MCF 10A (cell line): ENCODE measurements at regions of chr2 and their contacts with region 1.

Region 1: GRCh38 chr2:241102239-241102803 is at the start of gene MTERF4:
- DNase-seq: peak; percentile 88
- H3K4me3 Mint-ChIP-seq: peak within 1 kb of the TSS; percentile 94
- H3K27ac Mint-ChIP-seq: peak within 1 kb of the TSS; percentile 92
- H3K4me1 Mint-ChIP-seq: peaks cover 11% of the 10 kb centered on the region
- H3K27me3 Mint-ChIP-seq: no peaks in the 10 kb centered on the region
- CTCF ChIP-seq: no peak
- total RNA-seq, gene MTERF4: 29.9 and 34.3 TPM in 2 replicates

Region 2: GRCh38 chr2:240586198-240586918 is 516.0 kb before region 1 on chr2 and contains the start of gene CAPN10:
- CTCF ChIA-PET with region 1: no interaction called
- POLR2A ChIA-PET with region 1: interaction called, 12 read pairs
- intact Hi-C with region 1: no loop called
- DNase-seq: peak; percentile 96
- H3K4me3 Mint-ChIP-seq: peak within 1 kb of the TSS; percentile 87
- H3K27ac Mint-ChIP-seq: peak within 1 kb of the TSS; percentile 94
- H3K4me1 Mint-ChIP-seq: peaks cover 35% of the 10 kb centered on the region
- H3K27me3 Mint-ChIP-seq: no peaks in the 10 kb centered on the region
- CTCF ChIP-seq: no peak
- total RNA-seq, gene CAPN10: 27.6 and 35.2 TPM in 2 replicates

Region 3: DNA sequence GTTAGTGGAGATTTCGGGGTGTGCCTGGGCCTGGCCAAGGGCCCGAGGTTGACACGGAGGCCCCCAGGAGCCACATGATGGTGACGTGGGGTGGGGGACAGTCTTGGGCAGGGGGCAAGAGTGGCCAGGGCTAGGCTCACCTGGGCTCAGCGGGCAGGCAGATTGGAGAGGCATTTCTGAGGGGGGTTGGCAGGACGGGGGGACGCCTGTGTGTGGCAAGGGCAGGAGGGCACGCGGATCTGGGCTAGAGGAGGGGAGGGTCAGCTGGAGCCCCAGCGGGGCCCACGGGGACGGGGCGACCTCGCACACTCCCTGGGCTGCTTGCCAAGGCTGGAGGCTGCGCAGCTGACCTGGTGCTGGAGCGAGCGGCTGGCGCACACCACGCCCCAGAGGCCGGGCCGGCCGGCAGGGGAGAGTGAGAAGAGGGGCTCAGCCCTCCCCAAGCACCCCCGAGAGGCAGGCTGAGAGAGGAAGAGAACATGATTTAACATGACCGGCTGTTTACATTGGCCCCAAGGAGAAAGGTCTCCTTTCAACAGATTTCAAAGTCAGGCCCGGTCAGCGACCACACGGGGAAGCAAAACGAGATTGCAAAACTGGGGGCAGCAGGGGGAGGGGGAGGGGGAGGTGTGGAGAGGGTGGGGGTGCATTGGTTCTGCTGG is 141.9 kb before region 1 on chr2:
- CTCF ChIA-PET with region 1: no interaction called
- POLR2A ChIA-PET with region 1: no interaction called
- intact Hi-C with region 1: no loop called
- DNase-seq: peak; percentile 72
- H3K4me3 Mint-ChIP-seq: no peak overlapping the region
- H3K27ac Mint-ChIP-seq: no peak overlapping the region
- H3K4me1 Mint-ChIP-seq: no peaks in the 10 kb centered on the region
- H3K27me3 Mint-ChIP-seq: peaks cover 11% of the 10 kb centered on the region
- CTCF ChIP-seq: no peak

Region 4: DNA sequence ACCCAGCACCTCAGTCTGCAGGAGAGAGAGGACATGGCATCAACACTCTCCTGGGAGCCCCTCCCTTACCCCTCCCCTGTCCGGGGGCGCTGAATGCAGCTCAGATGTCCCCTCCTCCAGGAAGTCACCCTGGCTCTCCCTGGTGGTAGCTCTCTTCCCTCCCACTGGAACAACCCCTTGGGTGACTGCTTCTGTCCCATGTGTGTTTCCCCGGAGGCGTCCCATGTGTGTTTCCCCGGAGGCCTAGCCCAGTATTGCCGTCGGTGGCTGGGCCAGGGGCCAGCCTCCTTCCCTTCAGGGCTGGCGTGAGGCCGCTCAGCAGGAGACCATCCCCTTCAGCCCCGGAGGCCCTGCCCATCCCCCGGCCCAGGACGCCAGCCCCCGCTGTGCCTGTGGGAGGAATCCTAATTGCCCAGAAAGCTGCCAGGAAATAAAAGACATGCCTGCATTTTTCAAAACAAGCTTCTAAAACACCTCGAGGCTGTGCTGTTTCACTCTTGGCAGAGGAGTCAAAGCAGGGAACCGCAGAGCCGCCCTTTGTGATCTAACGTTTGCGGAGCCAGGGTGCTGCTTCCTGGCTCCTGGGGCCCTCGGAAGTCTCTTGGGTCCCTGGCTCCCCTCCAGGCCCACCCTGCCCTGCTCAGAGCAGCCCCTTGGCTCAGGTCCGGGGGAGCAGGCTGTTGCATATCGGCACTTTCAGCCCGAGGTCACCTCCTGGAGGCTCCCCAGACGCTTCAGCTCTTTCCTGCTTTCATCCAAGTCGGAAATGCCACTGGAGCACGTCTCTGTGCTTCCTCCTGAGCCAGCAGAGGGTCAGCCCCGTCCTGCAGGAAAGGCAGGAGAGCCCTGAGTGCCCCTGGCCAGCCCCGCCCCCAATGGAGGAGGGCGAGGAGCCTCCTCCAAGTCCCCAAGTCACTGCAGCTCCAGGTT is 92.5 kb before region 1 on chr2:
- CTCF ChIA-PET with region 1: interaction called, 3 read pairs
- POLR2A ChIA-PET with region 1: interaction called, 11 read pairs
- intact Hi-C with region 1: no loop called
- DNase-seq: peak; percentile 94
- H3K4me3 Mint-ChIP-seq: peak overlapping the region; percentile 60
- H3K27ac Mint-ChIP-seq: peak overlapping the region; percentile 27
- H3K4me1 Mint-ChIP-seq: peaks cover 12% of the 10 kb centered on the region
- H3K27me3 Mint-ChIP-seq: no peaks in the 10 kb centered on the region
- CTCF ChIP-seq: no peak

Region 5: GRCh38 chr2:241064008-241064801 is 38.1 kb before region 1 on chr2:
- CTCF ChIA-PET with region 1: no interaction called
- POLR2A ChIA-PET with region 1: interaction called, 22 read pairs
- intact Hi-C with region 1: no loop called
- DNase-seq: peak; percentile 57
- H3K4me3 Mint-ChIP-seq: peak overlapping the region; percentile 74
- H3K27ac Mint-ChIP-seq: no peak overlapping the region
- H3K4me1 Mint-ChIP-seq: peaks cover 21% of the 10 kb centered on the region
- H3K27me3 Mint-ChIP-seq: no peaks in the 10 kb centered on the region
- CTCF ChIP-seq: no peak

Region 6: DNA sequence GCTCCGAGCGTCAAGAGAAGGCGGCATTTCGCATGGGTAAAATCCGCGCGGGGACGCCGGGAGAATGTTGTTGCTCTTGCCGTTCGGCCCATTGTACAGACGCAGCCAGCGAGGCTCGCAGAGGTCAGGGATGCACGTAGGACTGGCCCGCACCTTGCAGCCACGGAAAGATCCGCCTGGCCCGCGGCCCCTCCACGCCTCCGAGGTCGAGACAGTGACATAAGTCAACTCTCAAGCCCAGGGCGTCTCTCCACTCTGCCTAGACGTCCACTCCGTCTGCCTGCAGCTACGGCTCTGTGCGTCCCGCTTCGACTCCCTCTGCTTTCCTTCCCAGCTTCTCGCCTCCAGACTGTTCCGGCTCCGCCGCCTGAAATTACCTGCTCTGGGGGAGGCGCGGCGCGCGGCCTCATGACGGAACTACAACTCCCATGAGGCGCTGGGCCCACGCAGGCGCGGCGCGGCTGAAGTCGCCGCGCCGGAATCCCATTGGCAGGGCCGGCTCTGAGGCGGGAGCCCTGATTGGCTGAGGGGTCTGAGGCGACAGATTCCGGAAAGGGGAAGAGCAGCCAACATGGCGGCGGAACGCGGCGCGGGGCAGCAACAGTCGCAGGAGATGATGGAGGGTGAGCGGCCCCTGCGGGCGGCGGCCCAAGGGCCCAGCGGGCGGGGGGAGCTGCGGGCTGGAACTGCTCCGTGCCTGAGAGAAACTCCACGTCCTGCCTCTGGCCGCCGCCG is 47.8 kb after region 1 on chr2 and contains the start of gene PPP1R7:
- CTCF ChIA-PET with region 1: no interaction called
- POLR2A ChIA-PET with region 1: interaction called, 38 read pairs
- intact Hi-C with region 1: loop called (anchors 2 kb)
- DNase-seq: peak; percentile 94
- H3K4me3 Mint-ChIP-seq: peak within 1 kb of the TSS; percentile 95
- H3K27ac Mint-ChIP-seq: peak within 1 kb of the TSS; percentile 79
- H3K4me1 Mint-ChIP-seq: peaks cover 30% of the 10 kb centered on the region
- H3K27me3 Mint-ChIP-seq: no peaks in the 10 kb centered on the region
- CTCF ChIP-seq: no peak
- total RNA-seq, gene PPP1R7: 38.9 and 43.9 TPM in 2 replicates

Region 7: DNA sequence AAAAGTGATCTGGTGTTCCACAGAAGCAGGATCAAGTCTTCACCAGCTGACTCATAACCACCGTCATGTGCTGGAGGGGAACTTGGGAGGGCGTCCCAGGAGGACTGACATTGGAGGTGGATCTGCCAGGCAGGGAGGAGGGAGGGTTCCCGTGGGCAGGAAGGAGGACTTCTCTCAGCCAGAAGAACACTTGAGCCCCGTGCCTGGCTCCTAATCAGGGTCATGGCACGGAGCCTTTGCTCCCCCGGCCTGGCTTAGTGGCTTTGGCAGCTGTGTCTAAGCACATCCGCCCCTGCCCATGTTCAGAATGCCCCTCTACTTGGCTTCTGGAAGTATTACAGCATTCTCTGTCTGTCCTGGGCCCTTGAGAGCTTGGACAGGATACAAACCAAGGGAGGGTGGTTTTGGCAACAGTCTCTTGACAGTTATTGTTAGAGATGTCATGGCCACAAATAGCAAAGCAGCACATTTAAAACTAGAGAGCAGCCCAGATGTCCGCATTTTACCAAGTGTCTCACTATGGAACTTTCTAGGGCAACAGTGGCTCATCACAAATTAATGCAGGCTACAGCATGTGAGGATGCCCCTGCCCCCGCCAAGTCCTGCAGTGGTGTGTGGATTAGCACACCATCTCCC is 59.4 kb after region 1 on chr2:
- CTCF ChIA-PET with region 1: no interaction called
- POLR2A ChIA-PET with region 1: no interaction called
- intact Hi-C with region 1: no loop called
- DNase-seq: no peak
- H3K4me3 Mint-ChIP-seq: no peak overlapping the region
- H3K27ac Mint-ChIP-seq: no peak overlapping the region
- H3K4me1 Mint-ChIP-seq: no peaks in the 10 kb centered on the region
- H3K27me3 Mint-ChIP-seq: no peaks in the 10 kb centered on the region
- CTCF ChIP-seq: no peak

Region 8: GRCh38 chr2:241195506-241196130 is 93.3 kb after region 1 on chr2:
- CTCF ChIA-PET with region 1: no interaction called
- POLR2A ChIA-PET with region 1: no interaction called
- intact Hi-C with region 1: no loop called
- DNase-seq: no peak
- H3K4me3 Mint-ChIP-seq: no peak overlapping the region
- H3K27ac Mint-ChIP-seq: no peak overlapping the region
- H3K4me1 Mint-ChIP-seq: no peaks in the 10 kb centered on the region
- H3K27me3 Mint-ChIP-seq: no peaks in the 10 kb centered on the region
- CTCF ChIP-seq: no peak